Caco-2 (cell line): ENCODE measurements at regions of chr1 and their contacts with region 1.

Region 1: GRCh38 chr1:221478050-221478949 is 263.6 kb downstream of the DUSP10 start:
- DNase-seq: peak; percentile 39 to 56
- H3K4me3 ChIP-seq: no peak overlapping the region
- H3K4me3 Mint-ChIP-seq: no peak overlapping the region
- H3K27ac Mint-ChIP-seq: no peak overlapping the region
- H3K4me1 ChIP-seq: no peaks in the 10 kb centered on the region
- H3K4me1 Mint-ChIP-seq: no peaks in the 10 kb centered on the region
- H3K27me3 ChIP-seq: no peaks in the 10 kb centered on the region
- H3K27me3 Mint-ChIP-seq: peaks cover 22% of the 10 kb centered on the region
- CTCF ChIP-seq: peak; percentile 54 to 78

Region 2: GRCh38 chr1:221381910-221382623 is 96.2 kb before region 1 on chr1:
- CTCF ChIA-PET with region 1: no interaction called
- POLR2A ChIA-PET with region 1: no interaction called
- intact Hi-C with region 1: no loop called
- DNase-seq: no peak
- H3K4me3 ChIP-seq: no peak overlapping the region
- H3K4me3 Mint-ChIP-seq: no peak overlapping the region
- H3K27ac Mint-ChIP-seq: no peak overlapping the region
- H3K4me1 ChIP-seq: no peaks in the 10 kb centered on the region
- H3K4me1 Mint-ChIP-seq: no peaks in the 10 kb centered on the region
- H3K27me3 ChIP-seq: no peaks in the 10 kb centered on the region
- H3K27me3 Mint-ChIP-seq: peaks cover 10% of the 10 kb centered on the region
- CTCF ChIP-seq: no peak

Region 3: DNA sequence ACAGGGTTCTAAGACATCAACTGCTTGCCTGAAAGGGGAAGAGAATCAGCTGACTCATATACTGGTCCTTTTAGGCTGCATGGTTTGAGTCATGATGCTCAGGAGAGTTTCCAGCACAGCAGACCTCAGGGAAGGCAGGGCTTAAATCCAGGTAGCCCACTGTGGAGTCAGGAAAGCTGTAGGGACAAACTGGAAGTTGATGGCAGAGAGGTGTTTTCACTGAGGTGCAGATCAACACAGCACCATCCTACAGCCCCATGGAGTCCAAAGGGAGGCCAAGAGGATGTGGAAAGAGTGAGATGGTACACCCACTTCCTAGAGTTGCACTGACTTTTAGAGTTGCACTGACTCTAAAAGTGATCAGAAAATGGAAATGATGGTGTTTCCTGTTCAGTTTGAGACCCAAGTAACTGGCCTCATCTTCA is 516.0 kb after region 1 on chr1:
- CTCF ChIA-PET with region 1: no interaction called
- POLR2A ChIA-PET with region 1: no interaction called
- intact Hi-C with region 1: loop called (anchors 1 kb)
- DNase-seq: no peak
- H3K4me3 ChIP-seq: no peak overlapping the region
- H3K4me3 Mint-ChIP-seq: no peak overlapping the region
- H3K27ac Mint-ChIP-seq: no peak overlapping the region
- H3K4me1 ChIP-seq: no peaks in the 10 kb centered on the region
- H3K4me1 Mint-ChIP-seq: no peaks in the 10 kb centered on the region
- H3K27me3 ChIP-seq: no peaks in the 10 kb centered on the region
- H3K27me3 Mint-ChIP-seq: no peaks in the 10 kb centered on the region
- CTCF ChIP-seq: no peak

Region 4: DNA sequence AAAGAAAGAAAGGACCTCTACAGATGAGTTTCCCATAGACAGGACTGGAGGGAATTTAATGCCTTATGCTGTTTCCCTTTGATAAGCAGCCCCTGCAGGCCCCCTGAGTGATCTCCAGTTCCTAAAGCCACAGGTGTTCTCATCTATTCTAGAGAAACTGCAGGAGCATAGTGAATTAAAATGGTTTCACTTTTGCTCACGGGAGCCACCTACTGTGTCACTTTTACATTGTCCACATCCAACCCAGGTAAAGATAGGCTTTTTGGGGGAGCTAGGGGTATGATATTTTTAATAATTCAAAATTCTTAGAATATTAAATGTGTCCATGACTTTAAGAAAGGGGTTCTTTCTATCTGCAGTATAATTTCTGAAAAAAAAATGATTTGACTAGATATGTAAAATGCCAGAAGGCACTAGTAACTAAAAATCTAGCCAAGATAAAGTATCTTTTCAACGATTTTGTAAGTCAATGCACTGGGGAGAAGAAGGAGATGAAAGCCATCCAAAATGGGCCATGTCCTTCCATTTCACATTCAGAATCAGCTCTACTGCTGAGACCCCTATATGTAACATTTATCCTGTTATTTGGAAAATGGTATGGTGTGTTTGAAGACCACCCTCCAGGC is 530.9 kb after region 1 on chr1:
- CTCF ChIA-PET with region 1: interaction called, 3 read pairs
- POLR2A ChIA-PET with region 1: no interaction called
- intact Hi-C with region 1: loop called (anchors 1 kb)
- DNase-seq: peak in 1 of 2 experiments; percentile 22
- H3K4me3 ChIP-seq: no peak overlapping the region
- H3K4me3 Mint-ChIP-seq: no peak overlapping the region
- H3K27ac Mint-ChIP-seq: no peak overlapping the region
- H3K4me1 ChIP-seq: no peaks in the 10 kb centered on the region
- H3K4me1 Mint-ChIP-seq: no peaks in the 10 kb centered on the region
- H3K27me3 ChIP-seq: no peaks in the 10 kb centered on the region
- H3K27me3 Mint-ChIP-seq: no peaks in the 10 kb centered on the region
- CTCF ChIP-seq: peak; percentile 26 to 43